OCI-LY7 (cell line): ENCODE measurements at regions of chr5 and their contacts with region 1.

Region 1: DNA sequence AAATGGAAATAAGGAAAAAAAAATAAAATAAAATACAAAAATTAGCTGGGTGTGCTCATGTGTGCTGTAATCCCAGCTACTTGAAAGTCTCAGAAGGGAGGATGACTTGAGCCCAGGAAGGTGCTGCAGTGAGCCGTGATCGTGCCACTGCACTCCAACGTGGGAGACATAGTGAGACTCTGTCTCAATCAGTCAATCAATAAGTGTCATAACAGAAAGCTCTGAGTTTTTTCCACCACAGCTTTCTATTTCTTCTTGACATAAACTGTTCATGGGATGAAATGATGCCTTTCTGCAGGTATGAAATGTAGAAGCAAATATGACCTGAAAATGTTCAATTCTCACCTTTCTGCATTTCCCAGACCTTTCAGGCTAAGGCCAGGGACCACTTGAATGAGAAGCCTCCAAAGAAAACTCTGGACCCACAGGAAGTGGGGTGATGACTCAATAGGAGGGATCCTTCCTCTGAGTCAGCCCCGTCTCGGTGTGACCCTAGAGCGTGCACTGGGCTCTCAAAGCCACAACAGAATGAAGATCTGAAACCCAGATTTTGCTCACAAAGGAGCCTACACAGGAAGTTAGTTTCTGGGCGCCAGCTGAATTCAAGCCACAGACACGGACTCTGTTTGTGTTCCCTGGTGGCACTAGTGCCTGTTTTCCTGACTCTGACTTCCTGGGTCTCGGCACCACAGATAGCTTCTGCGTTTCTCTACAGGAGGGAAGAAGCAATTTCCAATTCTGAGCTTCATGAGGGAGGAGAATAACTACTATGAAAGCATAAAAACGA is 62.0 kb downstream of the ANKH start:
- DNase-seq: peak; percentile 87
- H3K4me3 ChIP-seq: peak overlapping the region; percentile 51
- H3K27ac ChIP-seq: peak overlapping the region; percentile 67
- H3K4me1 ChIP-seq: peaks cover 40% of the 10 kb centered on the region
- CTCF ChIP-seq: no peak

Region 2: DNA sequence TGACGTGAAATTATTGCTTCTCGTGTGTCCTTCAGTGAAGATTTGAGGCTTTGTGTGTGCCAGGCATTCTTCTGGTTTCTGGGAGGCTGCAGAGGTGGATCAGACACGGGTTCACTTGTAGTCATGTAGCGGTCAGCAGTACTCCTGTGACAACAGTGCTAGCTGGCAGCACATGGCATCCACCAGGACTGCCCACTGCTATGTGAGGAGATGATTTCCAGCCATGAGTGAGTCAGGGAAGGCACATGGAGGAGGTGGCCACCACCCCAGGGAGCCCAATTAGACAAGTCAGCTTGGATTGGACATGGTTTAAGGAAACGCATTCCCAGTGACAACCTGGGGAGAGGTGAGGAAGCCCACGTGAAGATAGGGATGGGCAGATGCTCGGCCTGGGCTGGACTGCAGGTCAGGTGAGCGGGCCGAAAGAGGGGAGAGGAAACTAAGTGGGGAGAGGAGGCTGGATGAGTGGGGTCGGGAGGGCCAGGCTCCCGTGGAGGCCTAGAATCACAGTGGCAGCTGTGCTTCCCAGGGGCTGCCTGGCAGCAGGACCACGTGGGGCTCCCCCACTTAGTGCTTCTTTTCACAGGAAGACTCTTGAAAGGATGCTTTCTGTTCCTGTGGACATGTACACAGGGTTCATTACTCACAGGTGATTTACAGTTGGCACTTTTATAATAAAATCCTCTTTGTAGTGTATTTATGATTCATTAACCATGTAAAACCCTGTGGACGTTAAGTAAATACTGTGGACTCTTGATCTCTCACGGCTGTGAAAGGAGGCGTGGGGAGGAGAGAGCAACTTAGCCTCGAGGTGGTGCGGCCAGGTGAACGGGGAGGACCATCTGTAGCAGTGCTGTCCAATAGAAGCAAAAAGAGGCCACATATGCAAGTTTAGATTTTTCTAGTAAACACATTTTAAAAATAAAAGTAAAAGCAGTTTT is 307.9 kb before region 1 on chr5:
- CTCF ChIA-PET with region 1: no interaction called
- POLR2A ChIA-PET with region 1: no interaction called
- intact Hi-C with region 1: no loop called
- DNase-seq: no peak
- H3K4me3 ChIP-seq: no peak overlapping the region
- H3K27ac ChIP-seq: no peak overlapping the region
- H3K4me1 ChIP-seq: no peaks in the 10 kb centered on the region
- CTCF ChIP-seq: no peak

Region 3: GRCh38 chr5:14762549-14763216 is 46.9 kb before region 1 on chr5:
- CTCF ChIA-PET with region 1: no interaction called
- POLR2A ChIA-PET with region 1: interaction called, 6 read pairs
- intact Hi-C with region 1: loop called (anchors 1 kb)
- DNase-seq: peak; percentile 26
- H3K4me3 ChIP-seq: peak overlapping the region; percentile 52
- H3K27ac ChIP-seq: peak overlapping the region; percentile 35
- H3K4me1 ChIP-seq: peaks cover 28% of the 10 kb centered on the region
- CTCF ChIP-seq: no peak

Region 4: DNA sequence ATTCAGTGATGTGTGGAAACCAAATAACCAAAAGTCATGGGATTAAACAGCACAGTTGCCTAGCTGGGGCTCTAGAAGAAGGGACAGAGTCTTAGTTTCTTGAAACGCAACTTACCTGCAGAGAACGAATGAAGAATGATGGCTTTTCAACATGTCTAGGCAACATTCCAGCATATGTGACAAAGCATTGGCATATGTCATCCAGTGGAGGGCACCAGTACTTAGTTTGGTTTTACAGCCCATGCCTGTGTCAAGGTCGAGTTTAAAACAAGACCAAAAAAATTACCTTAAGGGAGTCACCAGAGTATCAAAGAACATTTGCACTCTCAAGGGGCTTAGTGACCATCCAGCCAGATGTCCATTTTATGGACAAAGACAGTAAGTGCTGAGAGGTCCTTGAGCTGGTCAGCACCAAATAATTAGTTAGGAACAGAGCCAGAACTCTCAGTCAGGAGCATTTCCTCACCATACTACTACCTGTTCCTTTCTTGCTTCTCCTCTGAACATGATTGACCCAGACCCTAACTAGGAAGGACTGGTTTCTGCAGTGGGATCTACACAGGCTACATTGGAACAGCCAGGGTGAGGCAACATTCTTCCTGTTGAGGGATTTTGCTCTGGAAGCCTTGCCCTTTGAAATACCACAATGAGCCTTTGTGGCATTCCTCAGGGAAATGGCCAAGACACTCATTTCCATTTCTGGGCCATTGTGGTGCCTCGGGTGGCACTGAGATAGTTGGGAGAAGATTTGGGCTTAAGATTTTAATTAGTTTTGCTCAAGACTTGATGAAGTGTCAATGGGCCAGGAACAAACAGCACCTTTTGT is 137.5 kb after region 1 on chr5:
- CTCF ChIA-PET with region 1: no interaction called
- POLR2A ChIA-PET with region 1: no interaction called
- intact Hi-C with region 1: no loop called
- DNase-seq: peak; percentile 30
- H3K4me3 ChIP-seq: no peak overlapping the region
- H3K27ac ChIP-seq: no peak overlapping the region
- H3K4me1 ChIP-seq: no peaks in the 10 kb centered on the region
- CTCF ChIP-seq: peak; percentile 70